ENCODE measurements at regions of chr6 and their contacts with region 1.

Region 1: DNA sequence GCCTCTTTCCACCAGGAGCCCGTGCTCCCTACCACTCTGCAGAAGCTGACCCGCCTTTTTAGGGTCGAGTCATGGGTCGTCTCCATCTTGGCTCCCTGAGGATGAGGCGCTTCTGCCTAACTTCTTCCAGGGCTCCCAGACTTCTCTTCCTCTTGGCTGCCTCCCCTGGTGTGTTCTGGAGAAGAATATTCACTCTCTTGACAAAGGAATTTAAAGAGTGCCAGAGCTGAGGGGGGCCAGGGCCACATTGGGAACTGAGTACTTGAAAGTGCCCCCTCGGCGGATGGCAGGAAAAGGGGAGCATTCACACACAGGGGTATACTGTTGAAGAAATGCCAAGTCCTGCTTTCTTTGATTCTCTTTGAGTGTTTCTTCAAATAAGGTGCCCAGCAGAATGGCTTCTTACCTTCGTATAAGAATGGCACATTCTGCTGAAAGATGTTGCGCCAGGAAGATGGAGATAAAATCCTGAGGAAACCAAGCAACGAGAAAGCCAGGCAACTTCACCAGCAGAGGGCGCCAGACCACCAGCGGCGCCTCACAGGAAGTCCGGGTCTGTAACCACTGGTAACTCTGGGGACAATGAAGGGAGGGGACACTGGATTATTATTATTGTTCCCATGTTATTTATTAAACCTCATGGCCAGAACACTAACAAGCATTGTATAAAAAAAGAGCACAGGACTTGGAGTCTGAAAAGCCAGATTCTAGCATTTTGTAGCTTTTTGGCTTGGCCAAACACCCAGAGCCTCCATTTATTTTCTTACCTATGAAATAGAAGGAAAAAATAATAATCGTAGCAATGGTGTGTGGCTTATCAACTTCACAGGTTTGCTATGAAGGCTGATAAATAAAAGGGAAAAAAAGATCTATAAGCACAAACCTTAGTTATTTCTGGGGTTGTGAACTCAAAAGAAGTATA is 176.7 kb downstream of the HACE1 start:
- DNase-seq: peak; percentile 44
- ATAC-seq: no peak

Region 2: GRCh38 chr6:104771258-104771832 is 88.4 kb after region 1 on chr6:
- intact Hi-C with region 1: loop called in 1 of 2 experiments (anchors 5 kb)
- DNase-seq: no peak
- ATAC-seq: no peak

Measured in left cardiac atrium (tissue), 4 donors.